H1 (cell line): ENCODE measurements at regions of chr16 and their contacts with region 1.

Region 1: DNA sequence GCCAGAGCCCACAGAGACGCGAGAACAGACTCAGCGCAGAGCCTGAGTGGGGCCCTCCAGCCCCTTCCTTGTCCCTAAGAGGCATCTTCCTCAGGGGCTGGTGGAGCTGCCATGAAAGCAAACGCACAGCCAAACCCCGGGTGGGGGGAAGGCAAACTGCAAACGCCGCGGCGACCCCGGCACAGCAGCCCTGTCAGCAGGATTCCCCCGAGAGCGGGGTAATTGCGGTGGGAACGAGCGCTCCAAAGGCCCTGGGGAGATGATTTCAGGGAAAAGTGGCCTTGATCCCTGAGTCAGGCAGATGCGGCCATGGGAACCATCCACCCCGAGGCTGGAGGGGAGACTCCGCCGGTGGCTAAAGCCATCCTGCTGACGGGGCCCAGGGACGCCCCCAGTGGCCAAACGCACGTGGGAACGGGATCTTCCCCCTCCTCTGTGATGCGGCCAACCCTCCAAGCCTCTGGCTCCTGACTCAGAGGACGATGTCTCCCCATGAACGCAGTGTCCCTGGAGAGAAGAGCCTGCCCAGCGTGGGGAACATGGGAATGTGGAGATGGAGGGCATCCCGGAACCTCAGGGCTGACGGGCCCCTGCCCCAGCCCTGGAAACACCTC is 25.1 kb downstream of the SLC7A5 start:
- DNase-seq: peak in 1 of 2 experiments; percentile 75
- H3K4me3 ChIP-seq: no peak overlapping the region
- H3K27ac ChIP-seq: no peak overlapping the region
- H3K4me1 ChIP-seq: peaks cover 0 to 6% (median 0%) of the 10 kb centered on the region in 4 experiments; a peak in 1 of 7 replicates
- H3K27me3 ChIP-seq: no peaks in the 10 kb centered on the region
- CTCF ChIP-seq: peak; percentile 44 to 80 (median 70)
- EP300 ChIP-seq: no peak
- POLR2A ChIP-seq: no peak
- RAD21 ChIP-seq: peak; percentile 37 to 53

Region 2: DNA sequence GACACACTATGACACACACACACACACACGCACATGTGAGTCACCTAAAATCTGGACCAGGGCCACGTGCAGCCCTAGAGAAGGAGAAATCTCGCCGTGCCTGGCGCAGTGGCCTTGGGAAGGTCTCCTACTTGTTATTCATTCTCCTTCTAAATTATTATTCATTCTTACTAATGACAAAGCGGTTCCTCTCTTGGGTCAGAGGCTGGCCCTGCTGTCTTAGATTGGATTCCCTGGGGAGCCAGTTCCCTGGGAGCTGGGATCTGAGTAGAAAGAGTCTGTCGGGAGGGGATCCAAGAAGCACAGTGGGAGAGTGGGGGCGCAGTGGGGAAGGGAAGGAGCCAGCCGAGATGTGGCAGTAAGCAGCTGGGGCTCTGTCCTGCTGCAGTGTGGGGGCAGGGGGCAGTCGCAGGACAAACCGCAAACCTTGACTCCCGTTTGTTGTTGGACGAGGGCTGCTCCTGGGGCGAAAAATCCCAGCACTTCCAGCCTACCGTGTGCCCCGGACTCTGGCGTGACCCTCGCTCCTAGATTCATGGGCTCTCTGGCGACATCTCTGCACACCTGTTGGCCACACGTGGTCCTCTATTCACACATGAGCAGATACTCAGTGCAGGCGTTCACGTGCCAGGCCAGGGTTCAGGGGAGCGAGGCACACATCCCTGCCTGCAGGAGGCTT is 260.6 kb before region 1 on chr16:
- CTCF ChIA-PET with region 1: no interaction called
- POLR2A ChIA-PET with region 1: no interaction called
- DNase-seq: no peak
- H3K4me3 ChIP-seq: no peak overlapping the region
- H3K27ac ChIP-seq: no peak overlapping the region
- H3K4me1 ChIP-seq: peaks cover 1 to 13% (median 7%) of the 10 kb centered on the region in 4 experiments; a peak in 6 of 7 replicates
- H3K27me3 ChIP-seq: no peaks in the 10 kb centered on the region
- CTCF ChIP-seq: peak in 2 of 3 experiments; percentile 19 to 21; a peak in 3 of 4 replicates
- EP300 ChIP-seq: no peak
- POLR2A ChIP-seq: no peak
- RAD21 ChIP-seq: 0 out of 4 replicates have a peak, but pooled peaks of 1 of the 2 experiments have one; percentile 2

Region 3: GRCh38 chr16:87628940-87629339 is 215.3 kb before region 1 on chr16:
- CTCF ChIA-PET with region 1: no interaction called
- POLR2A ChIA-PET with region 1: no interaction called
- DNase-seq: no peak
- H3K4me3 ChIP-seq: no peak overlapping the region
- H3K27ac ChIP-seq: no peak overlapping the region
- H3K4me1 ChIP-seq: no peaks in the 10 kb centered on the region; a peak in 2 of 7 replicates
- H3K27me3 ChIP-seq: no peaks in the 10 kb centered on the region
- CTCF ChIP-seq: no peak
- EP300 ChIP-seq: no peak
- POLR2A ChIP-seq: no peak
- RAD21 ChIP-seq: no peak

Region 4: GRCh38 chr16:87648236-87648635 is 196.0 kb before region 1 on chr16:
- CTCF ChIA-PET with region 1: no interaction called
- POLR2A ChIA-PET with region 1: no interaction called
- DNase-seq: no peak
- H3K4me3 ChIP-seq: no peak overlapping the region
- H3K27ac ChIP-seq: no peak overlapping the region
- H3K4me1 ChIP-seq: peaks cover 0 to 11% (median 0%) of the 10 kb centered on the region in 4 experiments; a peak in 3 of 7 replicates
- H3K27me3 ChIP-seq: no peaks in the 10 kb centered on the region
- CTCF ChIP-seq: no peak
- EP300 ChIP-seq: no peak
- POLR2A ChIP-seq: no peak
- RAD21 ChIP-seq: no peak

Region 5: GRCh38 chr16:87790278-87791032 is 53.8 kb before region 1 on chr16:
- CTCF ChIA-PET with region 1: interaction called, 16 read pairs
- POLR2A ChIA-PET with region 1: no interaction called
- DNase-seq: no peak
- H3K4me3 ChIP-seq: no peak overlapping the region
- H3K27ac ChIP-seq: no peak overlapping the region
- H3K4me1 ChIP-seq: no peaks in the 10 kb centered on the region
- H3K27me3 ChIP-seq: no peaks in the 10 kb centered on the region
- CTCF ChIP-seq: no peak
- EP300 ChIP-seq: no peak
- POLR2A ChIP-seq: no peak
- RAD21 ChIP-seq: no peak

Region 6: GRCh38 chr16:87877938-87878507 is 33.8 kb after region 1 on chr16:
- CTCF ChIA-PET with region 1: interaction called, 181 read pairs
- POLR2A ChIA-PET with region 1: interaction called, 507 read pairs
- DNase-seq: no peak
- H3K4me3 ChIP-seq: no peak overlapping the region
- H3K27ac ChIP-seq: no peak overlapping the region
- H3K4me1 ChIP-seq: peaks cover 3 to 26% (median 13%) of the 10 kb centered on the region in 4 experiments
- H3K27me3 ChIP-seq: no peaks in the 10 kb centered on the region; a peak in 1 of 7 replicates
- CTCF ChIP-seq: peak; percentile 12 to 55 (median 52); a peak in 3 of 4 replicates
- EP300 ChIP-seq: no peak
- POLR2A ChIP-seq: no peak
- RAD21 ChIP-seq: peak; percentile 8 to 40; a peak in 2 of 4 replicates

Region 7: DNA sequence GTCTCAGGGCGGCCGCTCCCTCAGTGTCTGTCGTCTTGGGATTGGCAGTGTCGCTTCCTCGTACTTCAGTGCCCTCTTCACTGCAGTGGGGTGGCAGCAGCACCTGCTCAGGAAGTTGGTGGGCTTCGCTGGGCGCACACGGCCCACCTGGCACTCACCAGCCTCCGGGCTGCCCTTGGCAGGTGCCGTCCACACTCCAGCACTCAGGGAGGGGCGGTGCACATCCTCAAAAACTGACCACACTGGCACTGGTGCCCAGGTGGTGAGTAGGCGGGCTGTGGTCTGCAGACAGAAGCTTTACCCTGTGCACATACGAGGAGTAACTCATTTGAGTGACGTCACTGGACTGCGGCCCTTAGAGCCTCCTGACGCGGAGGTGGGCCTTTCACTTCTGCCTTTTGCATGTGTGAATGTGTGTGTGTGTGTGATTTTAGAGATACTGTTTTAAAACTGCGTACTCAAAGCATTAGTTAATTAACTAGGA is 201.6 kb after region 1 on chr16:
- CTCF ChIA-PET with region 1: no interaction called
- POLR2A ChIA-PET with region 1: no interaction called
- DNase-seq: no peak
- H3K4me3 ChIP-seq: no peak overlapping the region
- H3K27ac ChIP-seq: no peak overlapping the region
- H3K4me1 ChIP-seq: no peaks in the 10 kb centered on the region
- H3K27me3 ChIP-seq: no peaks in the 10 kb centered on the region
- CTCF ChIP-seq: no peak
- EP300 ChIP-seq: no peak
- POLR2A ChIP-seq: no peak
- RAD21 ChIP-seq: no peak